ENCODE measurements at regions of chr1 and their contacts with region 1.

Region 1: DNA sequence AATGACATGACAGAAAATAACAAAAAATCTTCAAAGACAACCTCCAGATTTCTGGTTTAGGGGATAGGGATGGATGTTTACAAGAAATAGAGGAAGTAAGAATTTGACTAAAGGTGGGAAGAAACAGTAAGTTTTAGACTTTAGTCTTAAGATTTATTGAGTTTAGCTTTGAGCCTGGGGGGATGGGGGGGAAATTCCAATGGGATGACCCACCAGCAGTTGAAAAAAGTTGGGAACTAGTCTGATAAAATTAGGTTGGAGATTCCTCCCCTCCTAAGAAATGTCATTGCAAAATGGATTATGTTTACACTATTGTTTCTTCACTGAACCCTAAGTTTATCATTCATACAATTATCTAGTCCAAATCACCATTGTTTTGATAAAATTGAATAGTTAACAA is 28.4 kb downstream of the WDR26 start:
- DNase-seq: no peak
- ATAC-seq: no peak
- H3K4me3 ChIP-seq: no peak overlapping the region
- H3K4me3 Mint-ChIP-seq: no peak overlapping the region
- H3K27ac ChIP-seq: no peak overlapping the region
- H3K27ac Mint-ChIP-seq: no peak overlapping the region
- H3K4me1 ChIP-seq: no peaks in the 10 kb centered on the region
- H3K4me1 Mint-ChIP-seq: peaks cover 34% of the 10 kb centered on the region
- H3K27me3 ChIP-seq: no peaks in the 10 kb centered on the region
- H3K27me3 Mint-ChIP-seq: no peaks in the 10 kb centered on the region
- CTCF ChIP-seq: no peak

Region 2: DNA sequence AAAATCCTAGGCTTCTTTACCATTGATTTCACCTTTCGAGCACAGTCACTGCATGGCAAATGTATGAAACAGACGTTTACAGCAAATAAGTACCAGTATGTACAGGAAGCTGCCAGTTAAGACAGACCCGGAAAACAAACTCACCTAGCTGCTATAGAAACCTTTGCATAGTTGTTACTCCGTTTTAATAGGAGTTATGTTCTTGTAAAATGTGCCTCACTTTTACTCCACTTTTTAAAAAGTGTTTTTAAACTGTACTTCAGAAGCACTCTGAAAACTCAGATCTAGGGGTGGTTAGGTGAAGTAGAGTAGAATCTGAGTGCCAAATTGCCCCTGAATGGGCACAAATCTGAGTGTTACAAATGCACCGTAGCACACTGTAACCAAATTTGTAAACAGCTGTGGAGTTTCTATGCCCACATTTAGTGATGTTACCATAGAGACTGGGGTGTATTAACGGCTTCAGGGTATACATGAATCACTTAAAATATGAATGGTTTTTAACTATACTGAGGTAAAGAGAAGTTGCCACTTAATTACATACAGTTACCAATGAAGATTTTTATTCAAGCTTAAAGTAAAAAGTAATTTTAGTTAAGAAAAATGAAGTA is 18.8 kb before region 1 on chr1:
- CTCF ChIA-PET with region 1: no interaction called
- POLR2A ChIA-PET with region 1: no interaction called
- intact Hi-C with region 1: no loop called
- DNase-seq: peak in 2 of 9 experiments; percentile 40 to 62
- ATAC-seq: peak; percentile 75
- H3K4me3 ChIP-seq: no peak overlapping the region
- H3K4me3 Mint-ChIP-seq: peak overlapping the region; percentile 20
- H3K27ac ChIP-seq: peak overlapping the region; percentile 55 to 60
- H3K27ac Mint-ChIP-seq: peak overlapping the region; percentile 81
- H3K4me1 ChIP-seq: peaks cover 37% of the 10 kb centered on the region
- H3K4me1 Mint-ChIP-seq: peaks cover 50% of the 10 kb centered on the region
- H3K27me3 ChIP-seq: no peaks in the 10 kb centered on the region
- H3K27me3 Mint-ChIP-seq: no peaks in the 10 kb centered on the region
- CTCF ChIP-seq: no peak

Region 3: DNA sequence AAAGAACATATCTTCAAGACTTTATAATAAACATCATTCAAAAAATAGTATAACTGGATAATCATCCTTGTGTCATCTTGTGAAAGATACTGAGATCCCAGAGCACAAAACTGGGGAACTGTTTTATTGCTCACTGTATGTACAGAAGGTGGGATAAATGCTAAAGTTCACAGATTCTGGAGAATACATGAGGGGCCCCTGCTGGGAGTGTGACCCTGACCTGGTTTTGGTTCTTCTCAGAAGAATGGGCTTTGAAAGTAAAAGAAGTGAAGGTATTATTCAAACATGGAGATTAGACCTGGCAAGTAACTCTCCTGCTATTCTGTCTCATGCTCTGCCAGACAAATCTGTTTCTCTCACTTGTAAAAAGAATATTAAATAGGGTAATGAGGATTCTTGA is 13.9 kb after region 1 on chr1:
- CTCF ChIA-PET with region 1: interaction called, 3 read pairs
- POLR2A ChIA-PET with region 1: no interaction called
- intact Hi-C with region 1: loop called in 1 of 2 experiments (anchors 2 kb)
- DNase-seq: no peak
- ATAC-seq: no peak
- H3K4me3 ChIP-seq: no peak overlapping the region
- H3K4me3 Mint-ChIP-seq: no peak overlapping the region
- H3K27ac ChIP-seq: no peak overlapping the region
- H3K27ac Mint-ChIP-seq: no peak overlapping the region
- H3K4me1 ChIP-seq: peaks cover 2% of the 10 kb centered on the region
- H3K4me1 Mint-ChIP-seq: peaks cover 35% of the 10 kb centered on the region
- H3K27me3 ChIP-seq: no peaks in the 10 kb centered on the region
- H3K27me3 Mint-ChIP-seq: no peaks in the 10 kb centered on the region
- CTCF ChIP-seq: no peak

Region 4: GRCh38 chr1:224800486-224801119 is 394.4 kb after region 1 on chr1:
- CTCF ChIA-PET with region 1: no interaction called
- POLR2A ChIA-PET with region 1: no interaction called
- intact Hi-C with region 1: no loop called
- DNase-seq: no peak
- ATAC-seq: no peak
- H3K4me3 ChIP-seq: no peak overlapping the region
- H3K4me3 Mint-ChIP-seq: no peak overlapping the region
- H3K27ac ChIP-seq: no peak overlapping the region
- H3K27ac Mint-ChIP-seq: no peak overlapping the region
- H3K4me1 ChIP-seq: no peaks in the 10 kb centered on the region
- H3K4me1 Mint-ChIP-seq: no peaks in the 10 kb centered on the region
- H3K27me3 ChIP-seq: no peaks in the 10 kb centered on the region
- H3K27me3 Mint-ChIP-seq: peaks cover 5% of the 10 kb centered on the region
- CTCF ChIP-seq: no peak